Activated CD4-positive, alpha-beta memory T cell treated with anti-CD3 and anti-CD28 coated beads for 36 hours (primary cell): ENCODE measurements at regions of chrX and their contacts with region 1.

Region 1: GRCh38 chrX:24395775-24396174 is 35.3 kb downstream of the SUPT20HL1 start:
- DNase-seq: peak; percentile 39
- H3K4me3 Mint-ChIP-seq: no peak overlapping the region
- H3K27ac Mint-ChIP-seq: no peak overlapping the region
- H3K4me1 Mint-ChIP-seq: no peaks in the 10 kb centered on the region
- H3K27me3 Mint-ChIP-seq: peaks cover 2% of the 10 kb centered on the region

Region 2: DNA sequence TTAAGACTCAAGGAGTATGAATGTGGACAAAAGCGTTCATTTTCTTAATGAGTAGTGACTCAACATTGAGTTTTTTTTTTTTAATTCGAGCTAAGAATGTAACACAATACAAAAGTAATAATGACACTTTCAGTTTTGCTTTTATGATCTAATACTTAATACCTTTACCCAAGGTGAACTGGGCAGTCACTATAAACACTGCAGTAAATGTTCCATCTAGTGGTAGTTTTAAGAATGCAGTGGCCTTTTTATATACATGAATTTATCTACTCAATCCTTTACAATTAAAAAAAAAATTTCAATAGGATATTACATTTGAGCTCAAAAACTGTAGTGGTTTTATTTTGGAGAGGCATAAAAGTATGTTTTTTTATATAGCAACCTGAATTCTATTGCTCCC is 103.2 kb after region 1 on chrX:
- CTCF ChIA-PET with region 1: interaction called, 168 read pairs
- POLR2A ChIA-PET with region 1: no interaction called
- intact Hi-C with region 1: loop called (anchors 1 kb)
- DNase-seq: no peak
- H3K4me3 Mint-ChIP-seq: no peak overlapping the region
- H3K27ac Mint-ChIP-seq: no peak overlapping the region
- H3K4me1 Mint-ChIP-seq: peaks cover 24% of the 10 kb centered on the region
- H3K27me3 Mint-ChIP-seq: no peaks in the 10 kb centered on the region

Region 3: DNA sequence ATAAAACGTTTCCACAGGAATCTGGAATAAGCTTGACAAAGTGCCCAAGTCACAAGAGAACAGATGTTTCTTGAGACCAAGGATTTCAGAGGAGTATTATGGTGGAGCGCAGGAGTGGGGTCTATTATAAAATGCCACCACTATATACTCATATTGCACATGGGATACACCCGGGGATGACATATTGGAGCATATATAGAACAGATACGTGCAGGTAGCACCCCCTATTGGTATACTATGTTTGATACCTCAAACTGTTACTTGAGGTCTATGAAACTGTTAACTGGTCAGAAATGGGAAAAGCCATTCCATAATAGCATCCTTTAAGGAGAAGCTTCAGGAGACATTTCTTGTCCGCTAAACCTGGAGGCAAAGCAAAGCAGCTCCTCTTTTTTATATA is 165.3 kb after region 1 on chrX:
- CTCF ChIA-PET with region 1: interaction called, 6 read pairs
- POLR2A ChIA-PET with region 1: no interaction called
- intact Hi-C with region 1: loop called (anchors 1 kb)
- DNase-seq: no peak
- H3K4me3 Mint-ChIP-seq: no peak overlapping the region
- H3K27ac Mint-ChIP-seq: no peak overlapping the region
- H3K4me1 Mint-ChIP-seq: no peaks in the 10 kb centered on the region
- H3K27me3 Mint-ChIP-seq: no peaks in the 10 kb centered on the region